ENCODE measurements at regions of chr2 and their contacts with region 1.

Region 1: DNA sequence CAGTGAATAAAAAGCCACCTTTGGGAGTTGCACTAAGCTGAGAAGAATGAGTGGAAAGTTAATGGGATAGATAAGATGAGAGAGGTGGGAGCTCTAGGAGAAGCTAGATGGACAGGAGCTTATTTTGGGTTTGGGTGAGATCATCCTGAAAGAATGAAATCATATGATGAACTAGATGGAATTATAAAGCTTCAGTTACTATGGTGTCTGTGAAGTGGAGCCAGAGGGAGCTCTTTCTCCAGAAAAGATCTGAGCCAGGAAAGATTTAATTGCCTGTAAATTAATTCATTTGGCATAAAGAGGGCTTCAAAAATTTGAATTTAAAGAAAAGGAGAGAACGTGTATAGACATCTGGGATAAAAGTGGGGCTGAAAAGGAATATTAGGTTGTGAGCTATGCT is 10.3 kb downstream of the DNAH6 start:
- DNase-seq: peak in 2 of 9 experiments; percentile 24 to 37
- ATAC-seq: no peak
- H3K4me3 ChIP-seq: no peak overlapping the region
- H3K4me3 Mint-ChIP-seq: no peak overlapping the region
- H3K27ac ChIP-seq: no peak overlapping the region
- H3K27ac Mint-ChIP-seq: peak overlapping the region; percentile 60
- H3K4me1 ChIP-seq: peaks cover 14% of the 10 kb centered on the region
- H3K4me1 Mint-ChIP-seq: peaks cover 15% of the 10 kb centered on the region
- H3K27me3 ChIP-seq: no peaks in the 10 kb centered on the region
- H3K27me3 Mint-ChIP-seq: no peaks in the 10 kb centered on the region
- CTCF ChIP-seq: no peak

Region 2: GRCh38 chr2:84649487-84650142 is 123.1 kb after region 1 on chr2:
- CTCF ChIA-PET with region 1: no interaction called
- POLR2A ChIA-PET with region 1: no interaction called
- intact Hi-C with region 1: loop called in 1 of 2 experiments (anchors 10 kb)
- DNase-seq: peak in 1 of 9 experiments; percentile 43
- ATAC-seq: peak; percentile 54
- H3K4me3 ChIP-seq: no peak overlapping the region
- H3K4me3 Mint-ChIP-seq: peak overlapping the region; percentile 40
- H3K27ac ChIP-seq: peak overlapping the region in 1 of 2 experiments; percentile 11
- H3K27ac Mint-ChIP-seq: peak overlapping the region; percentile 86
- H3K4me1 ChIP-seq: peaks cover 81% of the 10 kb centered on the region
- H3K4me1 Mint-ChIP-seq: peaks cover 79% of the 10 kb centered on the region
- H3K27me3 ChIP-seq: no peaks in the 10 kb centered on the region
- H3K27me3 Mint-ChIP-seq: no peaks in the 10 kb centered on the region
- CTCF ChIP-seq: no peak

Region 3: GRCh38 chr2:84870306-84870705 is 343.7 kb after region 1 on chr2:
- CTCF ChIA-PET with region 1: interaction called, 13 read pairs
- POLR2A ChIA-PET with region 1: no interaction called
- intact Hi-C with region 1: loop called in 1 of 2 experiments (anchors 1 kb)
- DNase-seq: peak in 2 of 9 experiments; percentile 39 to 48
- ATAC-seq: no peak
- H3K4me3 ChIP-seq: no peak overlapping the region
- H3K4me3 Mint-ChIP-seq: peak overlapping the region; percentile 32
- H3K27ac ChIP-seq: no peak overlapping the region
- H3K27ac Mint-ChIP-seq: peak overlapping the region; percentile 82
- H3K4me1 ChIP-seq: peaks cover 82% of the 10 kb centered on the region
- H3K4me1 Mint-ChIP-seq: peaks cover 82% of the 10 kb centered on the region
- H3K27me3 ChIP-seq: no peaks in the 10 kb centered on the region
- H3K27me3 Mint-ChIP-seq: no peaks in the 10 kb centered on the region
- CTCF ChIP-seq: no peak

Region 4: GRCh38 chr2:84939426-84940087 is 413.0 kb after region 1 on chr2:
- CTCF ChIA-PET with region 1: no interaction called
- POLR2A ChIA-PET with region 1: no interaction called
- intact Hi-C with region 1: no loop called
- DNase-seq: peak; percentile 33 to 93 (median 68)
- ATAC-seq: peak; percentile 85
- H3K4me3 ChIP-seq: peak overlapping the region; percentile 29
- H3K4me3 Mint-ChIP-seq: peak overlapping the region; percentile 73
- H3K27ac ChIP-seq: peak overlapping the region; percentile 43 to 86
- H3K27ac Mint-ChIP-seq: peak overlapping the region; percentile 94
- H3K4me1 ChIP-seq: peaks cover 23% of the 10 kb centered on the region
- H3K4me1 Mint-ChIP-seq: peaks cover 27% of the 10 kb centered on the region
- H3K27me3 ChIP-seq: no peaks in the 10 kb centered on the region
- H3K27me3 Mint-ChIP-seq: no peaks in the 10 kb centered on the region
- CTCF ChIP-seq: no peak

Measured in CD8-positive, alpha-beta T cell (primary cell).